ENCODE measurements at regions of chr10 and their contacts with region 1.

Region 1: GRCh38 chr10:75099952-75100763 is 11.3 kb upstream of the SAMD8 start:
- DNase-seq: peak; percentile 67
- H3K4me3 Mint-ChIP-seq: no peak overlapping the region
- H3K27ac Mint-ChIP-seq: no peak overlapping the region
- H3K4me1 Mint-ChIP-seq: peaks cover 5% of the 10 kb centered on the region
- H3K27me3 Mint-ChIP-seq: no peaks in the 10 kb centered on the region

Region 2: GRCh38 chr10:74244097-74244685 is 856.0 kb before region 1 on chr10:
- intact Hi-C with region 1: loop called (anchors 1 kb)
- DNase-seq: no peak
- H3K4me3 Mint-ChIP-seq: no peak overlapping the region
- H3K27ac Mint-ChIP-seq: no peak overlapping the region
- H3K4me1 Mint-ChIP-seq: no peaks in the 10 kb centered on the region
- H3K27me3 Mint-ChIP-seq: no peaks in the 10 kb centered on the region

Region 3: GRCh38 chr10:74419958-74420375 is 680.2 kb before region 1 on chr10:
- intact Hi-C with region 1: loop called (anchors 10 kb)
- DNase-seq: peak; percentile 2
- H3K4me3 Mint-ChIP-seq: no peak overlapping the region
- H3K27ac Mint-ChIP-seq: no peak overlapping the region
- H3K4me1 Mint-ChIP-seq: peaks cover 9% of the 10 kb centered on the region
- H3K27me3 Mint-ChIP-seq: no peaks in the 10 kb centered on the region

Measured in activated T-helper 1 cell treated with anti-CD3 and anti-CD28 coated beads, Interleukin-12 subunit alpha, Interleukin-12 subunit beta, Interleukin-2, Interleukin-4 antibody, amounts not matched to agents 30 ng/mL and 10 ng/mL and 1 ng/mL, durations not matched to agents 14 hours and 24 hours and 36 hours (primary cell).